ENCODE measurements at regions of chr6 and their contacts with region 1.

Region 1: GRCh38 chr6:127516666-127517273 is 2.4 kb downstream of the MTCL3 start:
- DNase-seq: peak; percentile 67
- ATAC-seq: peak; percentile 87
- H3K4me3 ChIP-seq: peak overlapping the region; percentile 55 to 66
- H3K27ac ChIP-seq: no peak overlapping the region
- H3K4me1 ChIP-seq: no peaks in the 10 kb centered on the region; the same call in 1 of the 2 replicates
- H3K27me3 ChIP-seq: peaks cover 8% of the 10 kb centered on the region
- CTCF ChIP-seq: peak; percentile 96

Region 2: DNA sequence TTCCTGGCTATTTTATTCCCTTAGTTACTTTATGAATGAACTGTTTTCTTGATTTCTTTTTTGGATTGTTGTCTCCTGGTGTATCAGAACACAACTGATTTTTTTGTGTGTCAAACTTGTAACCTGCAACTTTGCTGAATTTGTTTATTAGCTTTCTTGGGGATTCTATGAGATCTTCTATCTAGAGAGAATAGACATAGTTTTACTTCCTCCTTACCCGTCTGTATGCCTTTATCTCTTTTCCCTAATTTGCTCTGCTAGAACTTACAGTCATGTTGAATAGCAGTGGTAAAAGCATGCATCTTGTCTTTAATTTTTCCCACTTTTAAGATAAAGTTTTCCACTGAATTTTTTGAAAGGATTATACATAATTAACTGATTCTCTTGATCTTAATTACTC is 237.0 kb before region 1 on chr6:
- CTCF ChIA-PET with region 1: no interaction called
- POLR2A ChIA-PET with region 1: interaction called, 18 read pairs
- in situ Hi-C with region 1: no loop called
- intact Hi-C with region 1: no loop called
- DNase-seq: no peak
- ATAC-seq: no peak
- H3K4me3 ChIP-seq: no peak overlapping the region
- H3K27ac ChIP-seq: no peak overlapping the region
- H3K4me1 ChIP-seq: no peaks in the 10 kb centered on the region
- H3K27me3 ChIP-seq: no peaks in the 10 kb centered on the region
- CTCF ChIP-seq: no peak

Region 3: GRCh38 chr6:127436578-127437110 is 80.1 kb before region 1 on chr6:
- CTCF ChIA-PET with region 1: no interaction called
- POLR2A ChIA-PET with region 1: interaction called, 10 read pairs
- in situ Hi-C with region 1: no loop called
- intact Hi-C with region 1: no loop called
- DNase-seq: no peak
- ATAC-seq: no peak
- H3K4me3 ChIP-seq: no peak overlapping the region
- H3K27ac ChIP-seq: no peak overlapping the region
- H3K4me1 ChIP-seq: no peaks in the 10 kb centered on the region
- H3K27me3 ChIP-seq: no peaks in the 10 kb centered on the region
- CTCF ChIP-seq: no peak

Region 4: GRCh38 chr6:127464881-127465459 is 51.8 kb before region 1 on chr6:
- CTCF ChIA-PET with region 1: interaction called, 10 read pairs
- POLR2A ChIA-PET with region 1: no interaction called
- in situ Hi-C with region 1: no loop called
- intact Hi-C with region 1: no loop called
- DNase-seq: peak; percentile 52
- ATAC-seq: peak; percentile 96
- H3K4me3 ChIP-seq: no peak overlapping the region
- H3K27ac ChIP-seq: no peak overlapping the region
- H3K4me1 ChIP-seq: no peaks in the 10 kb centered on the region
- H3K27me3 ChIP-seq: no peaks in the 10 kb centered on the region
- CTCF ChIP-seq: peak; percentile 92

Region 5: GRCh38 chr6:127496471-127496870 is 20.3 kb before region 1 on chr6:
- CTCF ChIA-PET with region 1: no interaction called
- POLR2A ChIA-PET with region 1: interaction called, 15 read pairs
- in situ Hi-C with region 1: no loop called
- intact Hi-C with region 1: no loop called
- DNase-seq: no peak
- ATAC-seq: no peak
- H3K4me3 ChIP-seq: no peak overlapping the region
- H3K27ac ChIP-seq: no peak overlapping the region
- H3K4me1 ChIP-seq: no peaks in the 10 kb centered on the region
- H3K27me3 ChIP-seq: no peaks in the 10 kb centered on the region
- CTCF ChIP-seq: no peak